ENCODE measurements at regions of chr10 and their contacts with region 1.

Region 1: GRCh38 chr10:91090761-91091529 is 129.5 kb upstream of the PCGF5 start:
- DNase-seq: peak in 1 of 3 donors; percentile 3
- ATAC-seq: no peak
- H3K4me3 ChIP-seq: no peak overlapping the region
- H3K4me1 ChIP-seq: no peaks in the 10 kb centered on the region
- CTCF ChIP-seq: no peak

Region 2: GRCh38 chr10:90993340-90993739 is 97.6 kb before region 1 on chr10:
- intact Hi-C with region 1: no loop called
- DNase-seq: no peak
- ATAC-seq: no peak
- H3K4me3 ChIP-seq: no peak overlapping the region
- H3K4me1 ChIP-seq: no peaks in the 10 kb centered on the region
- CTCF ChIP-seq: no peak

Region 3: GRCh38 chr10:91190876-91191583 is 100.1 kb after region 1 on chr10:
- intact Hi-C with region 1: no loop called
- DNase-seq: no peak
- ATAC-seq: no peak
- H3K4me3 ChIP-seq: no peak overlapping the region
- H3K4me1 ChIP-seq: no peaks in the 10 kb centered on the region
- CTCF ChIP-seq: no peak

Region 4: DNA sequence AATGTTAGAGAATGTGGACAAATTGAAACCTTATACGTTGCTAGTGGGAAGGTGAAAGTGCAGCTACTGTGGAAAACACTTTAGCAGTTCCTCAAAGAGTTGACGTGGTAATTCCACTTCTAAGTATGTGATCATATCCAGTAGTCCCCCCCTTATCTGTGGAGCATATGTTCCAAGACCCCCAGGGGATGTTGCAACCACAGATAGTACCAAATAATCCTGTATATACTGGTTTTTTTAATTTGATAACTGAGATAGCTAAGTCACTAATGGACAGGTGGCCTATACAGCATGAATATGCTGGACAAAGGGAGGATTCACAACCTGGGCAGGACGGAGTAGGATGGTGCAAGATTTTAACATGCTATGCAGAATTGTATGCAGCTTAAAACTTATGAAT is 166.4 kb after region 1 on chr10:
- intact Hi-C with region 1: loop called in 1 of 2 experiments (anchors 5 kb)
- DNase-seq: no peak
- ATAC-seq: no peak
- H3K4me3 ChIP-seq: no peak overlapping the region
- H3K4me1 ChIP-seq: no peaks in the 10 kb centered on the region
- CTCF ChIP-seq: no peak

Measured in mucosa of descending colon (tissue), 3 donors.